Mammary epithelial cell (primary cell): ENCODE measurements at regions of chr6 and their contacts with region 1.

Region 1: DNA sequence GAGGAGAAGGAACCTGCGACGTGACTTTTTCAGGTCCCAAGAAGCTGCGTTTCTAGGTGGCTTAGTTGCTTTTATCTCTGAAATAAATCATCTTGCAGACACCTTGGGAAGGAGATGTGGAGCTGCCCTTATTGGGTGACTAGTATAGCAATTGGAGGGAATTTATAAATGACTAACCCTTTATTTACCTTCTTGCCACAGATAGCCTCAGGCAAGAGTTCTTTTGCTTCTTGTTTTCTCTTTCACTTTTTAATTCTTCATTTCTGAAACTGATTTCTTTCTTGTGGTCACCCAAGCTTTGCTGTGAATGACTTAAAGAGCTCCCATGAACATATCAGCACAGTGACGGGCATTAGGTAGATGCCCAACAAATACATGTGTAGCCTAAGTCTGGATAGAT is 3.0 kb downstream of the ADGRF4 start:
- DNase-seq: peak; percentile 88
- H3K4me3 ChIP-seq: no peak overlapping the region
- H3K27ac ChIP-seq: peak overlapping the region; percentile 93
- H3K4me1 ChIP-seq: peaks cover 49% of the 10 kb centered on the region
- H3K27me3 ChIP-seq: no peaks in the 10 kb centered on the region
- CTCF ChIP-seq: no peak

Region 2: GRCh38 chr6:47434372-47435253 is 266.7 kb before region 1 on chr6:
- CTCF ChIA-PET with region 1: no interaction called
- dilution Hi-C with region 1: no loop called
- in situ Hi-C with region 1: no loop called
- intact Hi-C with region 1: no loop called
- DNase-seq: no peak
- H3K4me3 ChIP-seq: no peak overlapping the region
- H3K27ac ChIP-seq: no peak overlapping the region
- H3K4me1 ChIP-seq: no peaks in the 10 kb centered on the region
- H3K27me3 ChIP-seq: peaks cover 3% of the 10 kb centered on the region
- CTCF ChIP-seq: no peak

Region 3: DNA sequence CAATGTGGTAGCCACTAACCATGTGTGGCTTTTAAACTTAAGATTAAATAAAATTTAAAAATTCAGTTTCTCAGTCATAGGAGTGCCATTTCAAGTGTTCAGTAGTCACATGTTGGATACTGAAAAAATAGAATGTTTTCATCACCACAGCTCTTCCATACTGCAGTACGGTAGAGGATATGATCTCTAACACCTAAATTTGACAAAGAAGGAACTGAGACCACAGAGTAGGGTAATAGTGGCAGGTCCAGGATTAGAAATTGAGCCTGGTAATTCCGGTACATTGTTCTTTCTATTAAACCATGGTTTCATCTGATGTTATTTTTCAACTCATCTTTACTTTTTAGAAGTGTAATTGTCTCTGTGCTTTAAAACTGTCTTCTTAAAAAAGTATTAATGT is 119.8 kb before region 1 on chr6:
- CTCF ChIA-PET with region 1: no interaction called
- dilution Hi-C with region 1: no loop called
- in situ Hi-C with region 1: no loop called
- intact Hi-C with region 1: no loop called
- DNase-seq: no peak
- H3K4me3 ChIP-seq: no peak overlapping the region
- H3K27ac ChIP-seq: no peak overlapping the region
- H3K4me1 ChIP-seq: no peaks in the 10 kb centered on the region
- H3K27me3 ChIP-seq: no peaks in the 10 kb centered on the region
- CTCF ChIP-seq: no peak

Region 4: DNA sequence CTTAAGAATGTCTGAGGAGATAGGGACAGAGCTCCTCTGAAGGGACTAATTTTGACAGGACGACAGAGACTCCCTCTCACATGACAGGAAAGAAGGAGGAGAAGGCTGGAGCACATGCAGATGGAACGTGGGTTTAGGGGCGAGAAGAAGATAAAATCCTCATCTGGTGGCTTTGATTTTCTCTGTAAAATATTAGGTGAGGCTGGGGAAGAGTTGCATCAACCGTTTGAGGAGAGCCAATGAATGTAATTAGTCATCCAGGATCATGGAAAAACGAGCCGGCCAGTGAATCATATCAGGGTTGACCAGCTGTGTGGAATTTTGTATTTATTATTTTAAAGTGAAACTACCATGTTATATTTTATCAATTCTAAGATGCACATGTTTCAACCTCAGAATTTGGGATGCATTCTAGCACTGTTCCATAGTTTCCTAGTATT is 49.8 kb before region 1 on chr6:
- CTCF ChIA-PET with region 1: no interaction called
- dilution Hi-C with region 1: no loop called
- in situ Hi-C with region 1: no loop called
- intact Hi-C with region 1: loop called (anchors 2 kb)
- DNase-seq: peak; percentile 74
- H3K4me3 ChIP-seq: no peak overlapping the region
- H3K27ac ChIP-seq: peak overlapping the region; percentile 56
- H3K4me1 ChIP-seq: peaks cover 32% of the 10 kb centered on the region
- H3K27me3 ChIP-seq: no peaks in the 10 kb centered on the region
- CTCF ChIP-seq: no peak

Region 5: DNA sequence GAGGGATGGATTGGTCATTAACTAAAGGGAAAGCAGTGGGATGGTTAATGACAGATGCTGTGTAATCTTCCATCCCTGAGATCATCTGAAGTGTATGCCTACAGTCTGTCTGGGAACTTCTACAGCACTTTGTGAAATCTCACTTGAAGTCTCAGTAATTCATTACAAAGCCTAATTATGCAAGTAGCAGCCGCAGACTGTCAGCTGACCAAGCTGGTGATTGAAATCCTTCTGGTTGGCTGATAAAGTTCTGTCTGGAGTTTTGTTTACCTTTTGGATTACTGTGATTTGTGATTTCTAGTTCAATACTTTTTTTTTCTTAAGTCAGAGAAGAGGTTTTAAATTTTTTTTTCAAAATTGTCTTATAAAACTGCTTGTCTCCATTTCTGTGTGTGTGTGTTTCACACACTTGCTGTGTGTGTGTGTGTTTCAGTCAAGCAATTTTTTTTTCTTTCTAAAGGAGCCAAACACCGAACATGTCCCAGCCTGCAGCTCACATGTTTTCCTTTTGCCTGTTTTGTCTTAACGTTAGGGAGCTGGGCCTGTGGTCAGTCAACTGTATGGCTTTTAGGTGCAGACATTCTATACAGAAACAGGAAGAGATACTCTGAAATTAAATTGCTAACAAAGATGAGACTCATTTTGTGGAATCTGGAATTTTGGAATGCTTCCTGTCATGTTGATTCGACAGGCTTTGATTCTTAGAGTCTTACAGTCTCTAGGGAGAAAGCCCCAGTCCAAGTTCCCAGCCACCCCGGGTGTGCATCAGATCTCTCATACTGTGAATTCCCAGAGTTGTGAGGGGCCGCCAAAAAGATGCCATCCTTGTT is 31.5 kb before region 1 on chr6:
- CTCF ChIA-PET with region 1: no interaction called
- dilution Hi-C with region 1: loop called (anchors 5 kb)
- in situ Hi-C with region 1: no loop called
- intact Hi-C with region 1: loop called (anchors 2 kb)
- DNase-seq: peak; percentile 94
- H3K4me3 ChIP-seq: no peak overlapping the region
- H3K27ac ChIP-seq: peak overlapping the region; percentile 83
- H3K4me1 ChIP-seq: peaks cover 33% of the 10 kb centered on the region
- H3K27me3 ChIP-seq: no peaks in the 10 kb centered on the region
- CTCF ChIP-seq: no peak

Region 6: DNA sequence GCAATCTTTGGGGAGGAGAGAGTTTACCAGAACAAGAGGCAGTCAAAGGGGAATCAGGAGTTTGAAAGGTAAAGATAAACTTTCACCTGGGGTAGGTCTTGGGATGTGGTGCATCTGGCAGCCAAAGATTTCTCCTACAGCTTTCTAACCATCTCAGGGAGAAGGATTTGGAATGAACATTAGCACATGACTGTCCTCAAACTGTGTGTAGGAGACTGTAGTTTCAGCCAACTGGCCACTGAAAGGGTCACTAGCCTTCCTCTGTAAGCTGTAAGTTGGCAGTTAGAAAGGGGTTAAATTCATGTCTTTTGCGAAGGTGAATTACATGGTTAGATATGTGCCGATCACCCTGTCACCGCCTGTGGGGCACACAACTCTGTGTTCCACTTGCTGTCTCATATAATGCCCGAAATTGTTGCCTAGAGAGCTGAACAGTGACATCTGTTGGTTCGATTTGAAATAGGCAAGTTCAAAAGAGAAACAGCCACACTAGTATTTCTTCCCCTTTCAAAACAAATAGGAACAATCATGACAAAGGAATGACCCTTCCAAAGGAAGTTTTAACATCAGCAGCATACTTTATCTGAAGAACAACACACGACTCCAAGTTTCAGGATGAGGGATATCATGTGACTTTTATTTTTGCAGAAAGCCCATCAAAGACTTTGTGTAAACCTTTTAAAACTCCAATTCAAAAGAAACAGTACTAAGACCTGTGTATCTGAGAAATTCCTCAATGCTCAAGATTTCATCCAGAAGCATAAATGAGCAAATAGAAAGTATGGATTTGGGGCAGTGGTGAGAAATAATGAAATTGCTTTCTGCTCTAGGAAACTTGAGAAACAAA is 79.4 kb after region 1 on chr6:
- CTCF ChIA-PET with region 1: no interaction called
- dilution Hi-C with region 1: no loop called
- in situ Hi-C with region 1: no loop called
- intact Hi-C with region 1: no loop called
- DNase-seq: peak; percentile 73
- H3K4me3 ChIP-seq: no peak overlapping the region
- H3K27ac ChIP-seq: no peak overlapping the region
- H3K4me1 ChIP-seq: peaks cover 9% of the 10 kb centered on the region
- H3K27me3 ChIP-seq: no peaks in the 10 kb centered on the region
- CTCF ChIP-seq: peak; percentile 65 to 69

Region 7: GRCh38 chr6:48826901-48827701 is 1125.7 kb after region 1 on chr6:
- CTCF ChIA-PET with region 1: no interaction called
- dilution Hi-C with region 1: no loop called
- in situ Hi-C with region 1: no loop called
- intact Hi-C with region 1: loop called (anchors 1 kb)
- DNase-seq: peak; percentile 100
- H3K4me3 ChIP-seq: peak overlapping the region in 2 of 3 experiments; percentile 8 to 12
- H3K27ac ChIP-seq: peak overlapping the region; percentile 98
- H3K4me1 ChIP-seq: peaks cover 22% of the 10 kb centered on the region
- H3K27me3 ChIP-seq: no peaks in the 10 kb centered on the region
- CTCF ChIP-seq: no peak